ENCODE measurements at regions of chr2 and their contacts with region 1.

Region 1: GRCh38 chr2:96265840-96266679 is at the starts of genes CIAO1 and TMEM127:
- DNase-seq: peak; percentile 97 to 99 (median 98)
- H3K4me3 ChIP-seq: peak within 1 kb of the TSS; percentile 80
- H3K27ac ChIP-seq: peak within 1 kb of the TSS in 1 of 2 donors; percentile 47
- H3K4me1 ChIP-seq: peaks cover 15% of the 10 kb centered on the region
- H3K27me3 ChIP-seq: no peaks in the 10 kb centered on the region
- CTCF ChIP-seq: peak in 2 of 3 donors; percentile 30 to 34
- EP300 ChIP-seq: no peak
- POLR2A ChIP-seq: peak; percentile 85
- total RNA-seq, gene CIAO1: 50.8 to 103 (median 58.5) TPM
- total RNA-seq, gene TMEM127: 26.9 to 55.1 (median 51.6) TPM

Region 2: GRCh38 chr2:96145036-96145847 is 120.8 kb before region 1 on chr2 and contains the start of gene DUSP2:
- intact Hi-C with region 1: loop called in 1 of 4 experiments (anchors 10 kb)
- DNase-seq: peak; percentile 46 to 82 (median 63)
- H3K4me3 ChIP-seq: peak within 1 kb of the TSS; percentile 45
- H3K27ac ChIP-seq: no peak within 1 kb of the TSS
- H3K4me1 ChIP-seq: peaks cover 6% of the 10 kb centered on the region
- H3K27me3 ChIP-seq: no peaks in the 10 kb centered on the region
- CTCF ChIP-seq: no peak
- EP300 ChIP-seq: no peak
- POLR2A ChIP-seq: no peak
- total RNA-seq, gene DUSP2: 1.4 to 111 (median 3.6) TPM

Region 3: GRCh38 chr2:96208143-96209010 is 57.7 kb before region 1 on chr2 and contains the start of gene STARD7:
- intact Hi-C with region 1: loop called in 2 of 4 experiments (anchors 5 kb)
- DNase-seq: peak; percentile 97 to 99 (median 98)
- H3K4me3 ChIP-seq: peak within 1 kb of the TSS; percentile 84
- H3K27ac ChIP-seq: peak within 1 kb of the TSS; percentile 85 to 89
- H3K4me1 ChIP-seq: peaks cover 14% of the 10 kb centered on the region
- H3K27me3 ChIP-seq: no peaks in the 10 kb centered on the region
- CTCF ChIP-seq: peak in 2 of 3 donors; percentile 29 to 41
- EP300 ChIP-seq: peak; percentile 5
- POLR2A ChIP-seq: peak; percentile 88
- total RNA-seq, gene STARD7: 40.3 to 90.9 (median 80.4) TPM

Region 4: DNA sequence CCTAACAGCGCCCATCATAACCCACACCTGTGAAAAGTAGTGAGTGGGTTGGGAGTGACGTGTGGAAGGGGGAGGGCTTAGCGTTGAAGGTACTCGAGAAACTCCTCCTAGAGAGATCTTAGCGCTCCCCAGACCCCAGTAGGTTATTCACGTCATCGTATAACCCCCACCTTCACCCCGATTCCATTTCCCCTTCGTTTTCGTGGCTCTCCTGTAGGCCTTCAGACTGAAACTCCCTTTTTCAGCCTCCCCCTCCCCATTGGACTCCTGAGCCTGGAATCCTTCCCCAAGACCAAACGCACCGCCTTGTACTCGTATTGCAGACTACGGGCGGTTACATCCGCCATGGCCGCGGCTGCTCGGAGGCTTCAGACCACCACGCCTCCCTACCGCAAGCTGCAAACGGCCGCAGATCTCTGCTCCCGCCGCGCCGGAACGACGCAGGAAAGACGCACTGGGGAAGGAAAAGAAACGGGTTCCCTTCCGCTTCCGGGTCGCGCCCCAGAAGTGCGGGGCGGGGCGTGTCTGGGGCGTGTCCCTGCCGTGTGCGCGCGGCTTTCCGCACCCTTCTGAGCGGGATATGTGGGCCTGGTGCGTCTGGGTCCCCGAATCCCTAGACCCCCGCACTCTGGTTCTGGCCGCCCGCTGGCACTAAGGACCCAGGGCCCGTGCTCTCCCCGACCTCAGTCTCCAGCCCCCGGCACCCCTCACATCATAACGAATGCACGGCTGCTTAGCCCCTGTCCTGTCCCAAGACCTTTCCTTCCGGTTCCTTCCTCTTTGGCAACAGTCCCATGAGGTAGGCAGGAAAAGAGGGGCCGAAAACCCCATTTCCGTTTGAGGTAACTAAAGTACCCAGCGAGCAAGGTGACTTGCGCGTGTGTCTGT is 39.3 kb after region 1 on chr2 and contains the start of gene SNRNP200:
- intact Hi-C with region 1: loop called in 1 of 4 experiments (anchors 2 kb)
- DNase-seq: peak; percentile 81 to 91 (median 85)
- H3K4me3 ChIP-seq: peak within 1 kb of the TSS; percentile 71
- H3K27ac ChIP-seq: peak within 1 kb of the TSS in 1 of 2 donors; percentile 70
- H3K4me1 ChIP-seq: peaks cover 8% of the 10 kb centered on the region
- H3K27me3 ChIP-seq: no peaks in the 10 kb centered on the region
- CTCF ChIP-seq: peak in 1 of 3 donors; percentile 6
- EP300 ChIP-seq: no peak
- POLR2A ChIP-seq: peak; percentile 82
- total RNA-seq, gene SNRNP200: 71.1 to 149 (median 125) TPM